ENCODE measurements at regions of chr10 and their contacts with region 1.

Region 1: GRCh38 chr10:80662577-80663261 is 125.0 kb downstream of the SH2D4B start:
- H3K4me3 ChIP-seq: no peak overlapping the region
- H3K27ac ChIP-seq: no peak overlapping the region
- H3K4me1 ChIP-seq: no peaks in the 10 kb centered on the region
- CTCF ChIP-seq: peak; percentile 80

Region 2: GRCh38 chr10:78806681-78807221 is 1856.0 kb before region 1 on chr10:
- CTCF ChIA-PET with region 1: no interaction called
- POLR2A ChIA-PET with region 1: no interaction called
- H3K4me3 ChIP-seq: no peak overlapping the region
- H3K27ac ChIP-seq: no peak overlapping the region
- H3K4me1 ChIP-seq: peaks cover 7% of the 10 kb centered on the region; the same call in 1 of the 2 replicates
- CTCF ChIP-seq: no peak

Region 3: GRCh38 chr10:80032503-80032902 is 630.2 kb before region 1 on chr10:
- CTCF ChIA-PET with region 1: no interaction called
- POLR2A ChIA-PET with region 1: no interaction called
- H3K4me3 ChIP-seq: no peak overlapping the region
- H3K27ac ChIP-seq: no peak overlapping the region
- H3K4me1 ChIP-seq: no peaks in the 10 kb centered on the region
- CTCF ChIP-seq: no peak

Region 4: GRCh38 chr10:80444646-80445319 is 217.9 kb before region 1 on chr10:
- CTCF ChIA-PET with region 1: interaction called, 34 read pairs
- POLR2A ChIA-PET with region 1: no interaction called
- H3K4me3 ChIP-seq: no peak overlapping the region
- H3K27ac ChIP-seq: no peak overlapping the region
- H3K4me1 ChIP-seq: no peaks in the 10 kb centered on the region
- CTCF ChIP-seq: peak; percentile 90

Region 5: GRCh38 chr10:80540981-80541750 is 121.6 kb before region 1 on chr10:
- CTCF ChIA-PET with region 1: no interaction called
- POLR2A ChIA-PET with region 1: no interaction called
- H3K4me3 ChIP-seq: no peak overlapping the region
- H3K27ac ChIP-seq: no peak overlapping the region
- H3K4me1 ChIP-seq: no peaks in the 10 kb centered on the region
- CTCF ChIP-seq: no peak

Region 6: GRCh38 chr10:80647173-80647811 is 15.4 kb before region 1 on chr10:
- CTCF ChIA-PET with region 1: interaction called, 60 read pairs
- POLR2A ChIA-PET with region 1: no interaction called
- H3K4me3 ChIP-seq: no peak overlapping the region
- H3K27ac ChIP-seq: no peak overlapping the region
- H3K4me1 ChIP-seq: no peaks in the 10 kb centered on the region
- CTCF ChIP-seq: no peak

Region 7: GRCh38 chr10:80690434-80690833 is 27.7 kb after region 1 on chr10:
- CTCF ChIA-PET with region 1: interaction called, 11 read pairs
- POLR2A ChIA-PET with region 1: no interaction called
- H3K4me3 ChIP-seq: no peak overlapping the region
- H3K27ac ChIP-seq: no peak overlapping the region
- H3K4me1 ChIP-seq: no peaks in the 10 kb centered on the region
- CTCF ChIP-seq: no peak

Region 8: DNA sequence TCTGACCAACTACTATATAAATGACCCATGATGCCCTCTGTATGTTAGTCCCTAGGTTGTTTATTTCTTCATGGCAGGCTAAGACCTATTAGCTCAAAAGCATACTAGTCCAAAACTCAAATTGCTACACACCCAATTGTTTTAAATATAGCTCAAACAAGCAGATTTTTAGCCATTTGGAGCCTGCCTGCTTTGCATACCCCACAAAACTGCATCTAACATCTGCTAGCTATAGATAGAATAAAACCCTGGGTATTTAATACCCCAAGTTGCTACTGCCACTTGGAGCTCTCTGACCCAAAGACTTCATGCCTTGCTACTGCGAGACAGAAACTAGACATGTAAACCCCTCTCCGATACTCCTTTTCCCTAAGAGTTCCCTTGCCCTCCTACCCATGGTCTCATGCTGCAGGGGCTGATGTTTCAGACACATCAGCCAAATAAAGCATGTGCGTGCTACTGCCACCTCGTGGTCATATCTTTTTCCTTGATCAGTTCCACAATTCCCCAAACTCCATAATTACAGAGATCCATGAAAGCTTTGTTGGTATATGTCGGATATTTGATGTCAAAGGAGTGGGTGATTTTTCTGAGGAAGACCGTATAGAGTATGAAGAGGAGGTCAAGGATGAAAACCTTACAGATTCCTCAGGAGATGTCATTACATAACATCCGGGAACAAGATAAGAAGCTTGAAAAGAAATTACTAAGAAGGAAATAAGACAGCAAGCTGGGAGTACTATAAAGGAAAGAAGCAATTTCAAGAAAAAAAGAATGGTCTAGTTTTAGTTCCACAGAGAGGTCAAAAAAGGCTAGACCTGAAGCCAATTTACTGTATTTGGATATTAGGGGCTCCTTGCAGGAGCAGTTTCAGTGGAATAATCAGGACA is 261.6 kb after region 1 on chr10:
- CTCF ChIA-PET with region 1: interaction called, 42 read pairs
- POLR2A ChIA-PET with region 1: no interaction called
- H3K4me3 ChIP-seq: no peak overlapping the region
- H3K27ac ChIP-seq: no peak overlapping the region
- H3K4me1 ChIP-seq: no peaks in the 10 kb centered on the region
- CTCF ChIP-seq: no peak

Measured in HEK293 (cell line).